ENCODE measurements at regions of chr21 and their contacts with region 1.

Region 1: GRCh38 chr21:34073032-34073869 is at the starts of genes MRPS6 and SLC5A3:
- DNase-seq: peak; percentile 37 to 85 (median 72)
- ATAC-seq: peak; percentile 79
- H3K4me3 ChIP-seq: peak within 1 kb of the TSS; percentile 76 to 84
- H3K4me3 Mint-ChIP-seq: peak within 1 kb of the TSS; percentile 94
- H3K27ac ChIP-seq: peak within 1 kb of the TSS; percentile 67 to 72
- H3K27ac Mint-ChIP-seq: peak within 1 kb of the TSS; percentile 94
- H3K4me1 ChIP-seq: peaks cover 39% of the 10 kb centered on the region
- H3K4me1 Mint-ChIP-seq: peaks cover 47% of the 10 kb centered on the region
- H3K27me3 ChIP-seq: no peaks in the 10 kb centered on the region
- H3K27me3 Mint-ChIP-seq: no peaks in the 10 kb centered on the region
- CTCF ChIP-seq: no peak
- total RNA-seq, gene MRPS6: 14.3 to 15.4 TPM
- total RNA-seq, gene SLC5A3: 4.6 to 5.2 TPM

Region 2: DNA sequence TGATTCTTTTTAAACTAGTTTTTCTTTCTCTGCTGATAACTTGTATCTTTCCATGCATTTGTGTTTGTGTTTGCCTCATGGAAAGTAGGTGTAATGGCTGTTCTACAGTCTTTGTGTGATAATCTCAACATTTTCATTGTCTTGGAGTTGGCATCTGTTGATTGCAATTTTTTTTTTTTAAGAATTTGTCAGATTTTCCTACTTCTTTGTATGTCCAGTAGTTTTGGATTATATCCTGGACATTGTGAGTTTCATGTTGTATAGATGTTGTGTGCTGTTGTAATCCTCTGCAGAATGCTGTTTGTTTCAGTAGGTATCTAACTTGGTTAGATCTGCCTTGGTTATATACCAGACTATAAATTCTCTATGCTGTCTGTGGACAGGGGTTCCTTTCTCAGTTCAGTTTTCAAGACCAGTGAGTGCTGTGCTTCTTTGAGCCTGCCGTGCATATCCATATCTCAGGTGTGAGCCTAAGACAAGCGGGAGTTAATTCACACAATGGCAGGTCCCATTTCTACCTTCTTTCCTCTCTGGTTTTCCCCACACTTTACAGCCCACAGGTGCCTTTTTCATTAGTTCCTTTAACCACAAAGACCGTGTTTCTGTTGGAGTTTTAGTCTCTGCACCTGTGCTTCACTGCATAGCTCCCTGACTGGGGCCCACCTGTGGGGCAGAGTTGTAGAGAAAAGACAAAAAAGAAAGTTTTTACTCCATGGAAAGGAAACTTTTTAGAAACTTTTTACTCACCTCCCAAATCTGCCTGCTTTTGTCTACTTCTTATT is 361.0 kb before region 1 on chr21:
- CTCF ChIA-PET with region 1: no interaction called
- POLR2A ChIA-PET with region 1: no interaction called
- intact Hi-C with region 1: no loop called
- DNase-seq: no peak
- ATAC-seq: no peak
- H3K4me3 ChIP-seq: no peak overlapping the region
- H3K4me3 Mint-ChIP-seq: no peak overlapping the region
- H3K27ac ChIP-seq: no peak overlapping the region
- H3K27ac Mint-ChIP-seq: no peak overlapping the region
- H3K4me1 ChIP-seq: no peaks in the 10 kb centered on the region
- H3K4me1 Mint-ChIP-seq: peaks cover 2% of the 10 kb centered on the region
- H3K27me3 ChIP-seq: no peaks in the 10 kb centered on the region
- H3K27me3 Mint-ChIP-seq: peaks cover 2% of the 10 kb centered on the region
- CTCF ChIP-seq: no peak

Region 3: DNA sequence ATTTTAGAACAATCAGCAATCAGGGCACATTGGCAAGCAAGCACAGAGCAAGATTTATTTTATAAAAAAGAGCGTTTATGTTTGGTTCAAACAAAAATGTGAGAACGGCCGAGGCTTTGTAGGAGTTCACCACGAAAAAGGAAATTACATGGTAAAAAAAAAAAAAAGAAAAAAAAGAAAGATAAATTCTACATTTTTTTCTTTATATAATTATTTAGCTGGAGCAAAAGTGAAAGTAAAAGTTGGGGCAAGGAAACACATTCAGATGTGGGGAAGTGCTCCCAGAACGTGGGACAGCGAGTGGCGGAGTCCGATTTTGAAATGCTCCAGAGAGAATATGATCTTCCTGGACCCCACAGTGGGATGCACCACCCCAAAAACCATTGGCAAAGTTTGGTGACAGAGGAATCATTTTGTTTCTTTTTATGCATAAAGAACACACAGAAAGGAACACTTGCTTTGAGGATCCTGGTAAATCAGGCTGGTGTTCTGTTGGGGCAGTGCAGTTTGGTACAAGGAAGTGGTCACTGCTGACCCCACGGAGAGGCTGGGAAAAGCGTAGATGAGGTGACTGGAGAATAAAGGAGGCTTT is 141.4 kb before region 1 on chr21:
- CTCF ChIA-PET with region 1: interaction called, 3 read pairs
- POLR2A ChIA-PET with region 1: interaction called, 7 read pairs
- intact Hi-C with region 1: loop called in 1 of 2 experiments (anchors 1 kb)
- DNase-seq: peak in 2 of 9 experiments; percentile 27 to 34
- ATAC-seq: peak; percentile 26
- H3K4me3 ChIP-seq: peak overlapping the region; percentile 70 to 85
- H3K4me3 Mint-ChIP-seq: peak overlapping the region; percentile 94
- H3K27ac ChIP-seq: peak overlapping the region; percentile 85 to 90
- H3K27ac Mint-ChIP-seq: peak overlapping the region; percentile 99
- H3K4me1 ChIP-seq: peaks cover 42% of the 10 kb centered on the region
- H3K4me1 Mint-ChIP-seq: peaks cover 46% of the 10 kb centered on the region
- H3K27me3 ChIP-seq: no peaks in the 10 kb centered on the region
- H3K27me3 Mint-ChIP-seq: no peaks in the 10 kb centered on the region
- CTCF ChIP-seq: no peak

Region 4: DNA sequence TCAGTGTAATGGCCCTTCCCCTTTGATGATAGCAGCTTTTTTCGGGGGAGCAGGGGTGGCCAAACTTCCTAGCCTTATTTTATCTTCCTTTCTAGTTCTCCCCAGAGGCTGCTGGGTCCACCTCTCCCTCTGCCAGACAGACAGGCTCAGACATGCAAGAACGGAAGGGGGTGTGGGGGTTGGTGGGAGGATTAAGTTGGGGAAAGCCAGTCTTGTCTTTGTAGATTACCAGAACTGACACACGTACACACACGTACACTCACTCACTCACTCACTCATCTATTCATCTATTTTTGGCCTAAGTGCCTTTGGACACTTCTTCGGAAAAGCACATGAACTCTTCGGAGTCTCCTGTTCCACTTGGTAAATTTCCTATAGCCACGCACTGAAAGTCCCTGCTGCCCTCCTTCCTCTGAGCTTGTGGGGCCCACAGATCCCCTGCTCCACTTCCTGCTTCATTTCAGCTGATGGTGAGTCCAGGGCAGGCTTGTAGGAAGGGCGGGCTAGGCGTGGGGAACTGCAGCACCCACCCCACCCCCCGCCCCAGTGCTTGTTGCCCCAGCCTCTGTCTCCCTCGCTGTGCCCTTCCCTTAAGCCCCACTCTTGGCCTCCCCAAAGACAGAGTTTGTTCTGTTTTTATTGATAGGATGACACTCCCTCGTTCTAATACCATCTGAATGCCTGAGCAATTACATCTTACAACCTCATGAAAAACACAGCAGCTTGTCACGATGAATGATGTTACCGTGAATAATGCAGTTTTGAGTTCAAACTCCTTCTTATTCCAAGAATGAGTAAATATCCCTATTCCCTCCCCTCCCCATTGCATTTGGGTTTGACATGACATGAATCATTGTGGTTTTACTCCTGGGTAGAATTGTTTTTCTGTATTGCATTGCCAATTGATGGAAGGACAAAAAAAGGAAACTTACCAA is 96.9 kb before region 1 on chr21:
- CTCF ChIA-PET with region 1: interaction called, 3 read pairs
- POLR2A ChIA-PET with region 1: no interaction called
- intact Hi-C with region 1: loop called in 1 of 2 experiments (anchors 2 kb)
- DNase-seq: peak; percentile 14 to 79 (median 61)
- ATAC-seq: peak; percentile 61
- H3K4me3 ChIP-seq: no peak overlapping the region
- H3K4me3 Mint-ChIP-seq: peak overlapping the region; percentile 66
- H3K27ac ChIP-seq: peak overlapping the region; percentile 47 to 80
- H3K27ac Mint-ChIP-seq: peak overlapping the region; percentile 92
- H3K4me1 ChIP-seq: peaks cover 29% of the 10 kb centered on the region
- H3K4me1 Mint-ChIP-seq: peaks cover 48% of the 10 kb centered on the region
- H3K27me3 ChIP-seq: no peaks in the 10 kb centered on the region
- H3K27me3 Mint-ChIP-seq: no peaks in the 10 kb centered on the region
- CTCF ChIP-seq: no peak

Region 5: DNA sequence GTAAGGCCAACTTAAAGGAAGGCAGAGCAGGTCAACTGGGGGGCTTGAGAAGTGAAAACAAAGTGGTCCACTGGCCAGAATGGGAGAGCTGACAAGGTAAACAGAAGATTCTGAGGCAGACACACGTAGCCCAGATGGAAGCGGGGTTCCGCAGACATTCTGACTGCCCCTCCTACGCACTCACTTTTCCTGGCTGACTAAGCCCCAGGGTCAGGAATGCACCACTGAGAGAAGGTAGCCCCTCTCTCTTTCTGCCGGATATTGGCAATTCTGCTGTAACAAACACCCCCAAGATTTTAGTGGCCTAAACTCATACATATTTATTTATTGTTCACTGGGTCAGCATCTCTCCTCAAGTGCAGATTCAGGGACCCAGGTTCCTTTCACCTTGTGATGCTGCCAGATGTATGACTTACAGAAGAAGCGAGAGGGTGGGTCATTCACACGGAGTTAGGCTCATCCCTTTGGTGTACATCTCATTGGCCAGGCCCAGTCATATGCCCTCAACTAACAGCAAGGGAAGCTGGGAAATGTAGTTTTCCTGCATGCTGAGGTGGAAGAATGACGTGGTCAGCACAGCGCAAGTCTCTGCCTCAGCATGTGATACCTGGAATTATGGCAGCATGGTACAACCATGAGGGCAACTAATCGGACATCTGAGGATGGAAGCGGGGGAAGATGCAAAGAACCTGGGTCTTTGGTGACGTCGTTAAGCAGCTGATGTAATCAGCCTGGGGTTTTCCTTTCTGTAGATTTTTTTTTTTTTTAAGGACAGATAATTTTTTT is 43.3 kb before region 1 on chr21:
- CTCF ChIA-PET with region 1: no interaction called
- POLR2A ChIA-PET with region 1: no interaction called
- intact Hi-C with region 1: no loop called
- DNase-seq: peak in 5 of 9 experiments; percentile 18 to 75 (median 28)
- ATAC-seq: peak; percentile 77
- H3K4me3 ChIP-seq: no peak overlapping the region
- H3K4me3 Mint-ChIP-seq: no peak overlapping the region
- H3K27ac ChIP-seq: no peak overlapping the region
- H3K27ac Mint-ChIP-seq: peak overlapping the region; percentile 79
- H3K4me1 ChIP-seq: no peaks in the 10 kb centered on the region
- H3K4me1 Mint-ChIP-seq: peaks cover 5% of the 10 kb centered on the region
- H3K27me3 ChIP-seq: no peaks in the 10 kb centered on the region
- H3K27me3 Mint-ChIP-seq: no peaks in the 10 kb centered on the region
- CTCF ChIP-seq: no peak

Region 6: DNA sequence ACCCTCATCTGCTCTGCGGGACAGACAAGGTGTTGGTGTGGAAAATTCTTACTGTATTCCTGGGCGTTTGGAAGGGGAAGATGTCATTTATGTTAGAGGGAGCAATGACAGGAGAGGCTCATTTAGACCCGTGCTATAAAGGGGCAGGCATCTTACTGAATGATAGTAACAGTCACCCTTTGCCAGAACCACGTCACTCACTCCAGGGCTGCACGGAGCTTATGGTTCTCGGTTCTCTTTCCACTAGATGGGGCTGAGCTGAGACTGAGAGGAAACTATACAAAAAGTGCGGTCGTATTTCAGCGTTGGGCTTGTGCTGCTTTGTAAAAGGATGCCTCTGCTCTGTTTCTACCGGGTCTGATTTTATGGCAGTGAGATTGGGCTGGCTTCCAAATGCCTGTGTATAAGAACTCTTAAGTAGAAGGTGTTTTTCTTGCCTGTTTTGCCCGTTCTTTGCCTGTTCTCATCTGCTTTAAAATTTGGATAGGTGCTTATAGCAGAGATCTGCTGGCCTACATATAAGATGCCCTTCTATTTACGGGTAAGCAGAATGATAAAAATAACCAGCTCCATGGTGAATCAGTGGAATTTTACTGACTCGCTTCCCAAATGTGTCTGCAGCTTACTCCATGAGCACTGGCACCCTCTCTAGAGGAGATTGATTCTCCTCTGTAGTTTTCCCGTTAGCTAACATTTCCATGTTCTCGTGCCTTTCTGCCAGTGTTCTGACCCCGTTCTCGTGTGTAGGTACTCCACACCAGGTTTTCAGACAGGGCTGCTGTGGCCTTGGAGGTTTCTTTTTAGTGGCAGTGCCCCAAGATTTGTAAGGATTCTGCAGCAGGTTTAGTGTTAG is 56.0 kb after region 1 on chr21:
- CTCF ChIA-PET with region 1: interaction called, 3 read pairs
- POLR2A ChIA-PET with region 1: no interaction called
- intact Hi-C with region 1: loop called (anchors 2 to 5 kb)
- DNase-seq: peak; percentile 17 to 84 (median 64)
- ATAC-seq: peak; percentile 92
- H3K4me3 ChIP-seq: peak overlapping the region in 1 of 2 experiments; percentile 25
- H3K4me3 Mint-ChIP-seq: peak overlapping the region; percentile 58
- H3K27ac ChIP-seq: peak overlapping the region; percentile 28 to 48
- H3K27ac Mint-ChIP-seq: peak overlapping the region; percentile 88
- H3K4me1 ChIP-seq: peaks cover 69% of the 10 kb centered on the region
- H3K4me1 Mint-ChIP-seq: peaks cover 93% of the 10 kb centered on the region
- H3K27me3 ChIP-seq: no peaks in the 10 kb centered on the region
- H3K27me3 Mint-ChIP-seq: no peaks in the 10 kb centered on the region
- CTCF ChIP-seq: peak; percentile 47

Region 7: GRCh38 chr21:34351786-34352241 is 278.6 kb after region 1 on chr21:
- CTCF ChIA-PET with region 1: interaction called, 13 read pairs
- POLR2A ChIA-PET with region 1: no interaction called
- intact Hi-C with region 1: loop called in 1 of 2 experiments (anchors 1 kb)
- DNase-seq: peak in 3 of 9 experiments; percentile 9 to 56 (median 41)
- ATAC-seq: peak; percentile 63
- H3K4me3 ChIP-seq: no peak overlapping the region
- H3K4me3 Mint-ChIP-seq: no peak overlapping the region
- H3K27ac ChIP-seq: no peak overlapping the region
- H3K27ac Mint-ChIP-seq: no peak overlapping the region
- H3K4me1 ChIP-seq: no peaks in the 10 kb centered on the region
- H3K4me1 Mint-ChIP-seq: peaks cover 10% of the 10 kb centered on the region
- H3K27me3 ChIP-seq: no peaks in the 10 kb centered on the region
- H3K27me3 Mint-ChIP-seq: peaks cover 18% of the 10 kb centered on the region
- CTCF ChIP-seq: no peak

Region 8: GRCh38 chr21:35616090-35616489 is 1542.8 kb after region 1 on chr21:
- CTCF ChIA-PET with region 1: no interaction called
- POLR2A ChIA-PET with region 1: no interaction called
- intact Hi-C with region 1: no loop called
- DNase-seq: peak in 2 of 9 experiments; percentile 11 to 24
- ATAC-seq: no peak
- H3K4me3 ChIP-seq: no peak overlapping the region
- H3K4me3 Mint-ChIP-seq: no peak overlapping the region
- H3K27ac ChIP-seq: no peak overlapping the region
- H3K27ac Mint-ChIP-seq: no peak overlapping the region
- H3K4me1 ChIP-seq: no peaks in the 10 kb centered on the region
- H3K4me1 Mint-ChIP-seq: peaks cover 2% of the 10 kb centered on the region
- H3K27me3 ChIP-seq: no peaks in the 10 kb centered on the region
- H3K27me3 Mint-ChIP-seq: no peaks in the 10 kb centered on the region
- CTCF ChIP-seq: peak; percentile 28

Measured in CD8-positive, alpha-beta T cell (primary cell).